A549 (cell line): ENCODE measurements at regions of chr1 and their contacts with region 1.

Region 1: DNA sequence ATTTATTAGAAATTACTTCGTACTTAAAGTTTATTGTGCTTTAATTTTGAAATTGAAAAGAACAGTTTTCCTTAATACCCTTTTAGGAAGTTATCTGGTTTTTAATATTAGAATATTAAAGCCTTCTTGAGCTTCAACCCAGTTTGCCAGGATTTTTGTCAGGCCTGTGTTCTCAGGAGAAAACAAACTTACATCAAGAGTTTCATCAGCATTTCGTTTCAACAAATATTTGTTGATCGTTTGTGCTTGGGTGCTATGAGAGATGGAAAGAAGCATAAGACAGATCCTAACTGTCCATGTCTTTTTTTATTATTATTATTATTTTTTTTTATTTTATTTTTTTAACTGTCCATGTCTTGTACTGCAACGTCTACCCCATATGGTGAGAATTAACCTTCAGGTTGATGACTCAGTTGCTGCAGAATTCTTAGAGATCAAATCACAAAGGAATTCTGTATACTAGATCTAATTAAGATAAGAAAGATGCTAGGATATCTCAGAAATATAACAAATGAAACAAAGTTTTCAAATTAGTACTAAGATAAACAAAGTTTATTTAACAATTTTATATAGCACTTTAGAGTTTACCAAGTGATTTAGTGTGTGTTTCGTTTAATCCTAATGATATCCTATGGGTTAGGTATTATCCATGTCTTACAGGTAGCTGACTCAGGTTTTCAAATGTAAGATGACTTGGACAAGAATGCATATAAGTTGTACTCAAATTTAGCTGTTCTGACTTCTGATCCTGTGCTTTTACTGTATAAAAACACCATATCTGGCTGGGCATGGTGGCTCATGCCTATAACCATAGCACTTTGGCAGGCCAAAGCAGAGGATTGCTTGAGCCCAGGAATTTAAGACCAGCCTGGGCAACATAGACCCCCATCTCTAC is 14.3 kb downstream of the FBXO28 start:
- DNase-seq: no peak
- ATAC-seq: no peak
- H3K4me3 ChIP-seq: no peak overlapping the region
- H3K27ac ChIP-seq: no peak overlapping the region
- H3K4me1 ChIP-seq: no peaks in the 10 kb centered on the region; the same call in 2 of the 3 replicates
- CTCF ChIP-seq: no peak
- EP300 ChIP-seq: no peak
- POLR2A ChIP-seq: no peak
- RAD21 ChIP-seq: no peak

Region 2: DNA sequence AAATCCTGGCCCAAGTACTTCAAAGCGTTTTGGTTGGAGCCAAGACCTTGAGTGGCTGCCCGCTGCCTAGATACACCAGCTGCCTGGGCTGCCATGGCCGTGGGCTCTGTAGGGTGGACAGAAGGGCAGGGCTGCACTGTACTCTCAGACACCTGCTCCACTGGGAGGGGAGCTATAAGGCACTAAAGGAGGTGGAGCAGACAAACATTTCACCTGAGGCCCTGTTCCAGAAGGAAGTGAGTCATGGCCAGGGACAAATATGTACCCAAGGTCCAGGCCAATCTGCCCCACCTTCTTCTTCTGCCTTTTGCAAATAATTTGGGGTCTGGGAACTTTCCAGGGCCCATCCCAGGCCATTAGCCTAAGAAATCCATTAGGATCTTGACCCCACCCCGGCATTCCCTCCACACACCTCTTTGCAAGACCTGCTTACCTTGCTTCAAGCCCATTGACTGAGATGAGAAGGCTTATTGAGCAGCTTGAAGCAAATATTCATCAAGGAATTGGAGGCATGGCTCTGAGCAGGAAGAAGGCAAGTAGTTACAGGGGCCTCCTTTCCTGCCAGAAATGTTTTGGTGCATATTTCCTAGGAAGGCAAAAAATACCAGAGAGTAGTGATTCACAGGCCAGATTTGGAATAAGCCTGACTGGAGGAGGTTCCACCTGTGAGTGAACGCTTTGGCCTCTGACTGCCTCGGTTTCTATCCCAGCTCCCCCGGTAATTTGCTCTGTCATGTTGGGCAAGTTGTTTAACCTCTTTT is 462.4 kb before region 1 on chr1 and contains the start of gene CAPN8:
- CTCF ChIA-PET with region 1: no interaction called
- POLR2A ChIA-PET with region 1: no interaction called
- DNase-seq: no peak
- ATAC-seq: no peak
- H3K4me3 ChIP-seq: no peak within 1 kb of the TSS
- H3K27ac ChIP-seq: peak within 1 kb of the TSS; percentile 35 to 48; a peak in 3 of 6 replicates
- H3K4me1 ChIP-seq: peaks cover 22% of the 10 kb centered on the region
- CTCF ChIP-seq: no peak
- EP300 ChIP-seq: no peak
- POLR2A ChIP-seq: no peak
- RAD21 ChIP-seq: no peak
- polyA plus RNA-seq, gene CAPN8: 1.5 and 2.4 TPM in 2 replicates

Region 3: GRCh38 chr1:224113918-224114786 is 14.0 kb before region 1 on chr1 and contains the start of gene FBXO28:
- CTCF ChIA-PET with region 1: interaction called, 18 read pairs
- POLR2A ChIA-PET with region 1: no interaction called
- DNase-seq: peak; percentile 96 to 98
- ATAC-seq: peak; percentile 100
- H3K4me3 ChIP-seq: peak within 1 kb of the TSS; percentile 86
- H3K27ac ChIP-seq: peak within 1 kb of the TSS; percentile 96
- H3K4me1 ChIP-seq: peaks cover 14% of the 10 kb centered on the region; the same call in 2 of the 3 replicates
- CTCF ChIP-seq: no peak
- EP300 ChIP-seq: no peak
- POLR2A ChIP-seq: peak; percentile 97
- RAD21 ChIP-seq: no peak
- polyA plus RNA-seq, gene FBXO28: 25.6 and 31.5 TPM in 2 replicates

Region 4: GRCh38 chr1:224245188-224245587 is 117.0 kb after region 1 on chr1:
- CTCF ChIA-PET with region 1: no interaction called
- POLR2A ChIA-PET with region 1: no interaction called
- DNase-seq: peak in 1 of 2 experiments; percentile 19
- ATAC-seq: peak in 1 of 2 experiments; percentile 52; a peak in 3 of 6 replicates
- H3K4me3 ChIP-seq: no peak overlapping the region
- H3K27ac ChIP-seq: no peak overlapping the region
- H3K4me1 ChIP-seq: no peaks in the 10 kb centered on the region
- CTCF ChIP-seq: no peak
- EP300 ChIP-seq: no peak
- POLR2A ChIP-seq: no peak
- RAD21 ChIP-seq: no peak